Activated CD4-positive, alpha-beta T cell treated with anti-CD3 and anti-CD28 coated beads for 36 hours (primary cell): ENCODE measurements at regions of chr1 and their contacts with region 1.

Region 1: GRCh38 chr1:193059268-193060225 is at the starts of genes RO60 and UCHL5:
- DNase-seq: peak; percentile 97
- ATAC-seq: peak; percentile 94
- H3K4me3 Mint-ChIP-seq: peak within 1 kb of the TSS; percentile 90
- H3K27ac Mint-ChIP-seq: peak within 1 kb of the TSS; percentile 99
- H3K4me1 Mint-ChIP-seq: peaks cover 50% of the 10 kb centered on the region
- H3K27me3 Mint-ChIP-seq: no peaks in the 10 kb centered on the region
- total RNA-seq, gene RO60: 45.4 to 57.3 TPM
- total RNA-seq, gene UCHL5: 94.5 to 141 TPM

Region 2: GRCh38 chr1:192983349-192983980 is 76.1 kb before region 1 on chr1:
- CTCF ChIA-PET with region 1: no interaction called
- POLR2A ChIA-PET with region 1: no interaction called
- intact Hi-C with region 1: loop called (anchors 1 to 5 kb)
- DNase-seq: peak; percentile 67
- ATAC-seq: peak; percentile 84
- H3K4me3 Mint-ChIP-seq: no peak overlapping the region
- H3K27ac Mint-ChIP-seq: peak overlapping the region; percentile 76
- H3K4me1 Mint-ChIP-seq: peaks cover 39% of the 10 kb centered on the region
- H3K27me3 Mint-ChIP-seq: no peaks in the 10 kb centered on the region

Region 3: DNA sequence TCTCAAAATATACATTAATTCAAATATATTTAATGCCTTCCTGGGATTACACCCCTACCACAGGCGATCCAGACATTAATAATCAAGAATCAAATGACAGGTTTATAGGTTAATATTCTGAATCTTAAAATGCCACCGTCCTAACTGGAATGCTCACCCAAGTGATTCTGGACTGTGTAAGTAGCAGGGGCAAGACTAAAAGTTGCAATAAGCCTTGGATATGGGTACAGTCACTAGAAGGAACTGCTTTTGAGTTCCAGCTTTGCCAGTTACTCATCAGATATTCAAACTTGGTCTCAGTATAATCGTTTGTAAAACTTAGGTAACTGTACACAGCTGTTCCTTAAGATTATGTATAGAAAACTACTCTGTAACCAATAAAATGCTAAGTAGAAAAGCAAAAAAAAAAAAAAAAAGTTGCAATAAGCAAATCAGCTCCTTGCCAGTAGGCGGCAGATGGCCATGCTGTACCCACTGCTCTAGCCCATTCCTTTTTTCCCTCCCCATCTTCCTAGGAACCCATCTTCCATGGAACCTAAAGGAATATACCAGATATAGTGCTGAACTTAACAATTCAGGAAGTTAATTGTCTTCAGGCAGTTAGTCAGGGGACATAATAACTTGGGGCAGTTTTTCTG is 10.3 kb after region 1 on chr1:
- CTCF ChIA-PET with region 1: interaction called, 3 read pairs
- POLR2A ChIA-PET with region 1: no interaction called
- intact Hi-C with region 1: loop called in 1 of 2 experiments (anchors 1 kb)
- DNase-seq: no peak
- ATAC-seq: no peak
- H3K4me3 Mint-ChIP-seq: no peak overlapping the region
- H3K27ac Mint-ChIP-seq: peak overlapping the region; percentile 40
- H3K4me1 Mint-ChIP-seq: peaks cover 54% of the 10 kb centered on the region
- H3K27me3 Mint-ChIP-seq: no peaks in the 10 kb centered on the region

Region 4: DNA sequence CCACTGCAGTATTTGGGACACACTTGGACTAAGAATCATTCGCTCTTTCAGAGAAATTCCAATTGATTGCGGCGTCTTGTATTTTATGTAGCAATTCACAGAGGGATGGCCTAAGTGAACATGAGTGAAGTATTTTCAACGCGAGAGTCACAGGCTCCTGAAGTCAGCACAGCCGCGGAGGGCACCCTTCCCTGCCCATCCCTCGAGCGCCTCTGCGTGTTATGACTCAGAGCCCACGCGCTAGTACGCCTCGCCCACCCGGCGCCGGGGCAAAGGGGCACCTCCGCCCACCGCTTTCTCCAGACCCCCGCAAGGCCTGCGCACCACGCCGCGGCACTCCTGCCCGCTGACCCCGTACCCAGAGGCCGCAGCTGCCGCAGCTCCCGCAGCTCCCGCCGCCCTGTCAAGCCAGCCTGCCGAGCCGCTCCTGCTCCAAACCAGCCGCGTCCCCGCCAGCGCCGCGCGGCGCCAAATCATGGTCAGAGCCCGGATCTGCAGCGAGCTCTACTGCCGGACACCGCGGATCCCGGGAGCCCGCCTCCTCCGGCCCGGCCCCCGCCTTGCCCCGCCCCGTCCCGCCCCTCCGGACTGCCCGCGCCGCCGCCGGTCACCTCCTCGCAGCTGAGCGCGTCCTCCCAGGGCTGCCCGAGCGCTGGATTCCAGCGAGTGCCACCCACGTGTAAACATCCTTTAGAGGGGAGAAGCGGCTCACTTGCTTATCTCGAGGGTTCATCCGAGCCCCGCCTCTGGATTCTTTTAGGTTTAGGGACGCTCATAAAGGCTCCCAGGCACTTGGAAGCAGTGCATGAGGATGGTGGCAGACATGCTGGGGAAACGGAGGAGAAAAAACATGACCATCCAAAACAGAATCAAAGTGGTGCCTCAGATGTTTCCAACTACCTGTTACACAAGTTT is 45.6 kb after region 1 on chr1 and contains the start of gene GLRX2:
- CTCF ChIA-PET with region 1: no interaction called
- POLR2A ChIA-PET with region 1: interaction called, 5 read pairs
- intact Hi-C with region 1: loop called (anchors 1 to 2 kb)
- DNase-seq: peak; percentile 75
- ATAC-seq: peak; percentile 91
- H3K4me3 Mint-ChIP-seq: peak within 1 kb of the TSS; percentile 88
- H3K27ac Mint-ChIP-seq: peak within 1 kb of the TSS; percentile 78
- H3K4me1 Mint-ChIP-seq: peaks cover 14% of the 10 kb centered on the region
- H3K27me3 Mint-ChIP-seq: no peaks in the 10 kb centered on the region
- total RNA-seq, gene GLRX2: 29.8 to 30.2 TPM